CD4-positive, alpha-beta T cell (primary cell): ENCODE measurements at regions of chr10 and their contacts with region 1.

Region 1: DNA sequence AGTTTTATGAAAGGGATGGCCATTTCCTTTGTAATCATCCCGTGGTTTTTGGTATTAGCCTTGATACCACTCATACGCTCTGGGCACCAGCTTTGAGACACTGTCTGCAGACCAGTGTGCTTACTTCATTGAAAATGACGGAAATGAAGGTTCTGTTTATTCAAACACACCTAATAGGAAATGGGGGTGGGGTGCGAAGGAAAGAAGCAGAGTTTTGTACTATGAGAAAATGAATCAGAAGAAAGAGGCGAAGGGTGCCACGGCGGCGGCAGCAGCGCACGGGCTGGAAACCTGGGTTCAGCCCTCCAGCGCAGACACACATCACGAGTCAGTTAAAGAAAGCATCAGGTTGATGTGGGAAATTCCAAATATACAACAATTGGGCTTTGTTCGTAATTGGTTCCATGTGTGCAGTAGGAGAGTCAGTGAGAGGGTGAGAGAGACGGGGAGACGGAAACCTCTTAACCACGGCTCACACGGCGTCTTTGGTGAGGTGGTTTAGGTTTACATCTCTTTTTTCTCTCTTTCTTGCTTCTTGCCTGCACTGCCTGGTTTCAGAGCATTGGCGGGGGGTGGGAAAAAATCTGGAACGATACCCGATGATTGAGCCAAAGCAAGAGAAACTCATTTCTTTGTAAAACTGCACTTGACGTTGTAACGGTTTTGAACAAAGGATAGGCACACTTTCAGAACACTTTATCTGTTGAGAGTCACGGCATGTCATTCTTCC is 321.2 kb downstream of the FRMD4A start:
- DNase-seq: peak; percentile 33 to 92 (median 66)
- ATAC-seq: peak; percentile 85
- H3K4me3 ChIP-seq: peak overlapping the region; percentile 52
- H3K4me3 Mint-ChIP-seq: peak overlapping the region; percentile 74
- H3K27ac ChIP-seq: peak overlapping the region; percentile 53 to 64
- H3K27ac Mint-ChIP-seq: peak overlapping the region; percentile 88
- H3K4me1 ChIP-seq: peaks cover 32% of the 10 kb centered on the region
- H3K4me1 Mint-ChIP-seq: peaks cover 62% of the 10 kb centered on the region
- H3K27me3 ChIP-seq: no peaks in the 10 kb centered on the region
- H3K27me3 Mint-ChIP-seq: no peaks in the 10 kb centered on the region
- CTCF ChIP-seq: no peak

Region 2: DNA sequence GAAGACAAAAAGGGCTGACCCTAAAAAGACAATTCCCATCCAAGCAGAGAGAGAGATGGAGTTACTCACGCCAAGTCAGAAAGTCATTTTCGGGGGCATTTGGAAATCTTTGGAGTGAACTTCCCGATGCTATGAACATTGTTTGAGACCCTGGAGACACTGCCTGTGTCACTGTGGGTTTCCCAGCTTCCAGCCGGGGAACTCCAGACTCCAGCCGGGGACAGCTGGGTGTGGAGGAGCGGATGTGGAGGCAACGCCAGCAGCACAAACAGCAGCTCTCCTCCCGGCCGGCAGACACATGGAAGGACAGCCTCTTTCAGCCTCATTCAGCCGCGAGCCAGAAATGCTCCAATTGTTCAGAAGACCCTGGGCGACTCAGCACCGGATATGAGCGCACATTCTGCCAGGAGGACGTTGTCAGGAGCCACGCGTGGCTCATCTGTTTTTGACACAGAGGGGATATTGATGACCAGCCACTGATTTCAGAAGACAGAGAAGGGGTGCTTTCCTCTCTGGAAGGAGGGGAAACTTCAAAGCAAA is 325.2 kb before region 1 on chr10:
- CTCF ChIA-PET with region 1: no interaction called
- POLR2A ChIA-PET with region 1: no interaction called
- intact Hi-C with region 1: no loop called
- DNase-seq: no peak
- ATAC-seq: no peak
- H3K4me3 ChIP-seq: no peak overlapping the region
- H3K4me3 Mint-ChIP-seq: no peak overlapping the region
- H3K27ac ChIP-seq: no peak overlapping the region
- H3K27ac Mint-ChIP-seq: no peak overlapping the region
- H3K4me1 ChIP-seq: no peaks in the 10 kb centered on the region
- H3K4me1 Mint-ChIP-seq: no peaks in the 10 kb centered on the region
- H3K27me3 ChIP-seq: no peaks in the 10 kb centered on the region
- H3K27me3 Mint-ChIP-seq: peaks cover 3% of the 10 kb centered on the region
- CTCF ChIP-seq: no peak

Region 3: GRCh38 chr10:13994932-13995331 is 14.6 kb before region 1 on chr10:
- CTCF ChIA-PET with region 1: no interaction called
- POLR2A ChIA-PET with region 1: no interaction called
- intact Hi-C with region 1: loop called in 1 of 2 experiments (anchors 2 kb)
- DNase-seq: no peak
- ATAC-seq: no peak
- H3K4me3 ChIP-seq: no peak overlapping the region
- H3K4me3 Mint-ChIP-seq: no peak overlapping the region
- H3K27ac ChIP-seq: no peak overlapping the region
- H3K27ac Mint-ChIP-seq: no peak overlapping the region
- H3K4me1 ChIP-seq: peaks cover 8% of the 10 kb centered on the region
- H3K4me1 Mint-ChIP-seq: peaks cover 24% of the 10 kb centered on the region
- H3K27me3 ChIP-seq: no peaks in the 10 kb centered on the region
- H3K27me3 Mint-ChIP-seq: no peaks in the 10 kb centered on the region
- CTCF ChIP-seq: no peak

Region 4: DNA sequence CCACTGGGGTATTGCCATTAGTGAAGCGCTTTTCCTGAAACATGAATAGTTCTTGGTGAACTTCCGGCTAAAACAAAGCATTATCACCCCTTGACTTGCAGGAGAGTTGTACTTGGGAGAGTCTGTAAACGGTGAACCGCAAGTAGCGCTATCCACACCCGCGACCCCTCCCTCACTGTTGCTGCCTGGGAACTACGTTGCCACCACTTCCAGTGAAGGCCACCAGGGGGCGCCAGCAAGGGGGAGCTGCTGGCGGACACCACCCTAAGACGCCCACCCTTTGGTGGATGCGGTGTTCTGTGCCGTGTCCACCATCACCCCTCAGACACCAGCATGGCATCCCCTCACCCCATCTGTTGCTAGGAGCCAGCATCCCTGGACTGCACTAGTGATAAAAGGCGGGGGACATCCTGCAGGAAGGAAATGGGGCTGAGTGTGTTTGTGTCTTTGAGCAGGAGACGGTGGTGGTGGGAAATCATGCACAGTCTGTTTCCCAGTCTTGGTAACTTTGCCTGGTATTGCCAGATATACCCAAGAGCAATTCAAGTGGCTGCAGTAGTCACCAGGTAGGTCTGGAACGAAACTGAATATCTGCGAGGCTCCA is 23.0 kb after region 1 on chr10:
- CTCF ChIA-PET with region 1: no interaction called
- POLR2A ChIA-PET with region 1: no interaction called
- intact Hi-C with region 1: loop called in 1 of 2 experiments (anchors 2 kb)
- DNase-seq: peak; percentile 15 to 71 (median 34)
- ATAC-seq: peak; percentile 52
- H3K4me3 ChIP-seq: no peak overlapping the region
- H3K4me3 Mint-ChIP-seq: no peak overlapping the region
- H3K27ac ChIP-seq: no peak overlapping the region
- H3K27ac Mint-ChIP-seq: no peak overlapping the region
- H3K4me1 ChIP-seq: peaks cover 6% of the 10 kb centered on the region
- H3K4me1 Mint-ChIP-seq: peaks cover 8% of the 10 kb centered on the region
- H3K27me3 ChIP-seq: no peaks in the 10 kb centered on the region
- H3K27me3 Mint-ChIP-seq: no peaks in the 10 kb centered on the region
- CTCF ChIP-seq: peak; percentile 73

Region 5: DNA sequence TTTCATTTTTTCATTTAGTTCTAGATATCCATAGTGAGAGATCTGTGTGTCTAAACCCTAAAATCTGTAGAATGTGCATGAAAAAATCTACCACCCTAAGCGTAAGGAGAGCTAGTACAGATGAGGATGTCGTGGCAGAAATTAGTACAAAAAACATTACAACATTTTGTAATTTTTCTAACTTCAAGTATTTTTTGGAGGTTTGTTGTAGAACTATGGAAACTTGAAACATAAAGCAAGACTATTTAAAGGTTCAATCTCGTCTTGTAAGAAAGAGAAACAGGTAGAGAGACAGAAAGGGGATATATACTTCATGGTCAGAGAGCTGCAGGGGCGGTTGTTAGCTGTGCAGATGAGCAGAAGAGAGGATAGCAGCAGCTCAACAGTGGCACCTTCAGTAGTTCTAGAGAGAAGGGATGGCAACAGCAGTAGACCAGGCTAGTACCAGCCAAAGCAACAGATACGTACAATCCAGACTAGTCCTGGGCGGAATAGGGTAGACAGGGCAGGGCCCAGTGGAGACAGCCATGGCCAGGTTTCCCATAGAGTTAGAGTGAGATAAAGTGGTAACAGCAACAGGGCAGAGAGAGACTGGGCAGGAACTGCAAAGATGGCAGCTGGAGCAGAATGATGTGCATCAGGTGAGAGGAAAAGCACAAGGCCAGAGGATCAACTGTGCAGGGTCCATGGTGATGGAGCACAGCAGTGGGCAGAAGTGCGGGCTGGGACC is 175.9 kb after region 1 on chr10:
- CTCF ChIA-PET with region 1: no interaction called
- POLR2A ChIA-PET with region 1: interaction called, 4 read pairs
- intact Hi-C with region 1: loop called in 1 of 2 experiments (anchors 2 kb)
- DNase-seq: peak in 12 of 14 experiments; percentile 10 to 89 (median 26)
- ATAC-seq: peak; percentile 68
- H3K4me3 ChIP-seq: peak overlapping the region; percentile 46
- H3K4me3 Mint-ChIP-seq: peak overlapping the region; percentile 77
- H3K27ac ChIP-seq: peak overlapping the region; percentile 52 to 85
- H3K27ac Mint-ChIP-seq: peak overlapping the region; percentile 91
- H3K4me1 ChIP-seq: peaks cover 26% of the 10 kb centered on the region
- H3K4me1 Mint-ChIP-seq: peaks cover 20% of the 10 kb centered on the region
- H3K27me3 ChIP-seq: peaks cover 19 to 26% of the 10 kb centered on the region in 2 experiments
- H3K27me3 Mint-ChIP-seq: peaks cover 28% of the 10 kb centered on the region
- CTCF ChIP-seq: no peak

Region 6: GRCh38 chr10:14556285-14556956 is 546.9 kb after region 1 on chr10:
- CTCF ChIA-PET with region 1: no interaction called
- POLR2A ChIA-PET with region 1: no interaction called
- intact Hi-C with region 1: loop called in 1 of 2 experiments (anchors 10 kb)
- DNase-seq: peak in 3 of 14 experiments; percentile 68 to 77 (median 71)
- ATAC-seq: peak; percentile 32
- H3K4me3 ChIP-seq: no peak overlapping the region
- H3K4me3 Mint-ChIP-seq: peak overlapping the region; percentile 45
- H3K27ac ChIP-seq: peak overlapping the region; percentile 38 to 53
- H3K27ac Mint-ChIP-seq: peak overlapping the region; percentile 98
- H3K4me1 ChIP-seq: peaks cover 86% of the 10 kb centered on the region
- H3K4me1 Mint-ChIP-seq: peaks cover 98% of the 10 kb centered on the region
- H3K27me3 ChIP-seq: no peaks in the 10 kb centered on the region
- H3K27me3 Mint-ChIP-seq: no peaks in the 10 kb centered on the region
- CTCF ChIP-seq: no peak